ENCODE measurements at regions of chr14 and their contacts with region 1.

Region 1: GRCh38 chr14:33839193-33840076 is 111.4 kb downstream of the EGLN3 start:
- H3K4me3 Mint-ChIP-seq: no peak overlapping the region
- H3K27ac Mint-ChIP-seq: no peak overlapping the region
- H3K4me1 Mint-ChIP-seq: no peaks in the 10 kb centered on the region
- H3K27me3 Mint-ChIP-seq: peaks cover 2% of the 10 kb centered on the region

Region 2: GRCh38 chr14:33618361-33619105 is 220.9 kb before region 1 on chr14:
- intact Hi-C with region 1: no loop called
- H3K4me3 Mint-ChIP-seq: no peak overlapping the region
- H3K27ac Mint-ChIP-seq: no peak overlapping the region
- H3K4me1 Mint-ChIP-seq: no peaks in the 10 kb centered on the region
- H3K27me3 Mint-ChIP-seq: no peaks in the 10 kb centered on the region

Region 3: GRCh38 chr14:34098045-34098984 is 258.9 kb after region 1 on chr14:
- intact Hi-C with region 1: loop called (anchors 1 kb)
- H3K4me3 Mint-ChIP-seq: no peak overlapping the region
- H3K27ac Mint-ChIP-seq: no peak overlapping the region
- H3K4me1 Mint-ChIP-seq: no peaks in the 10 kb centered on the region
- H3K27me3 Mint-ChIP-seq: peaks cover 4% of the 10 kb centered on the region

Region 4: DNA sequence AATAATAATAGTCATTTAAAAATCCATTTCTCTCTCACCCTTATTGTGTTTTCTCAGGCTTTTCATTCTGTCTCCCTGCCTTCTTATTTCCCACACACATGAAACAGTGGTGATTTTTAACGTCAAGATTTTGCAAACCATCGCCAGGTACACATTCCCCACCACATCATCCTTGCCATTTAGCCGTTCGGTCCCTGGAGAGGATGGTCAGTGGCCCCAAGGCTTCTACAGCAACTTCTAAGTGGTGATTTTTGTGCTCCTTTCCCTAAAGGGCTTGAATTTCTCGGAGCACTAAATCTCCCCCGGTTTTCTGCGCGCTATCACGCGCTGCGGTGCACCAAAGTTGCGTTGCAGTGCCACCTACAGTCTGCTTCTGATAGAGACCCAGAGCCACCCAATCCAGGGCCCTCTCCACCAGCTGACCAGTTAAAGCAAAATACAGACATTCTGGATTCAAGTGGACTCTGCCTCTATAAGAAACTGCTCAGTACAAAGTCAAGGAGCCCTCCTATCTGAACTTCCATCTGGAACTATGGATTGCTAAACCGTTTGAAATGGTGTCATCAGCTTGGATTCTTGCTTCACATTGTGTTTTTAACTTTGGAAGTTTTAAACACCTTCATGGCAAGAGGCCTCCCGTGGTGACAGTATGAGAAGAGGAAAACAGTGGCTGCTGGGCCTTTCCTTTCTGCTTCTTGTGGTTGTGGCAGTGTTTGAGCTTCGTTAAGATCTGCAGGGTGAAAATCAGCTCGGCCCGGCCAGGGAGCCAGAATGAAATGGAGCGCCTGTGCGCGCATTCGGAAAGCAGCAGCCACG is 388.6 kb after region 1 on chr14:
- intact Hi-C with region 1: loop called (anchors 1 kb)
- H3K4me3 Mint-ChIP-seq: no peak overlapping the region
- H3K27ac Mint-ChIP-seq: no peak overlapping the region
- H3K4me1 Mint-ChIP-seq: no peaks in the 10 kb centered on the region
- H3K27me3 Mint-ChIP-seq: peaks cover 20% of the 10 kb centered on the region

Region 5: DNA sequence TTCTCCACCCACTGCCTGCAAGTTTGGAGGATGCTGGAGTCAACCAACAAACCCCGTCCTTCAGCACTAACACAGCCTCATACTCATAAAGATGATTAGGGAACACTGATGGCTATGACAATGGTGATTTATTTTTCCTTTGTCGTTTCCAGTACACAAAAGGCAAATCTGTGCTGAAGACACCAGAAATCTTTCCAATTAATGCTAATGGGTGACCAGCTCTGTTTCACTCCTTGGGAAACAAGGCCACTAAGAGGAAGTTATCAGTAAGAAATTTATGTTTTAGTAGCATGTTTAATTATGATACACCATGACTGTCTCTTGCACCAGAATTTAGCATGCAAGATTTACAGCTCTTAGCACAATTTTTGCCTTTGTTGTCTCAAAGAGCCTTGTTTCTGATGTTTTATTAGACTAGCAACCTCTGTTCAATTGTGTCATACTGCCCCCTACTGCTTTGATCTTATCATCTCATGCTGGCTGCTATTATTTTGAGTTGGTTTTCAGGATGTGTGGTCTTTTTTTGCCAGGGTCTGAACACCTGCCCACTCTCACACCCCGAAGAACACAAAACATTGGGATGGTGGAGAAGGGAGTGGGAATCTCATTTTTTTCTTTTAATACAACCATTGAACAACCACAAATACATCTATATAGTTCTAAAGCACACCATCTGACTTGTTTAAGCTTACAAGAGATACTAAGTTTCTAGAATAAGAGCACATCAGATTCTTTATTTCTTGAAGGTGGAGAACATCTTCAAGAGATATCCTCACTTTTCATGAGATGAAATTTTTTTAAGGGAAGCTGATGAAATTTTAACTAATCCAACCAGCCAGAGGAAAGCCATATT is 461.7 kb after region 1 on chr14:
- intact Hi-C with region 1: loop called (anchors 10 kb)
- H3K4me3 Mint-ChIP-seq: no peak overlapping the region
- H3K27ac Mint-ChIP-seq: no peak overlapping the region
- H3K4me1 Mint-ChIP-seq: no peaks in the 10 kb centered on the region
- H3K27me3 Mint-ChIP-seq: no peaks in the 10 kb centered on the region

Measured in dendritic cell treated with granulocyte-macrophage colony-stimulating factor and Interleukin-4, amounts not matched to agents 40 ng/mL and 50 ng/mL, for 4 days (primary cell).